ENCODE measurements at regions of chr12 and their contacts with region 1.

Region 1: DNA sequence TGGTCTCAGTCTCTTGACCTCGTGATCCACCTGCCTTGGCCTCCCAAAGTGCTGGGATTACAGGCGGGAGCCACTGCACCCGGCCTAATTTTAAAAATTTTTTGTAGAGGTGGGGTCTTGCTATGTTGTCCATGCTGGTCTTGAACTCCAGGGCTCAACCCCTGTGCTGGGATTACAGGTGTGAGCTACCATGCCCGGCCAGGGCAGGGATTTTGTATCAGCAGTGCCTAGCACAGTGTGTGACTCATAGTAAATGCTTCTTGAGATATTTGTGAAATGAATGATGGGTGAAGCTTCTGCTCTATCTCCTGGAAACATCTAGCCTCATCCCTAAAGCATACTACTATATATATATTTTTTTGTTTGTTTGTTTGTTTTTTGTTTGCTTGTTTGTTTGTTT is 36.5 kb downstream of the CCDC63 start:
- DNase-seq: no peak
- H3K4me3 ChIP-seq: no peak overlapping the region
- H3K27ac ChIP-seq: no peak overlapping the region
- H3K4me1 ChIP-seq: no peaks in the 10 kb centered on the region
- H3K27me3 ChIP-seq: no peaks in the 10 kb centered on the region
- CTCF ChIP-seq: no peak

Region 2: GRCh38 chr12:110528277-110528839 is 354.9 kb before region 1 on chr12:
- CTCF ChIA-PET with region 1: no interaction called
- dilution Hi-C with region 1: no loop called
- in situ Hi-C with region 1: no loop called
- intact Hi-C with region 1: no loop called
- DNase-seq: no peak
- H3K4me3 ChIP-seq: no peak overlapping the region
- H3K27ac ChIP-seq: no peak overlapping the region
- H3K4me1 ChIP-seq: peaks cover 19% of the 10 kb centered on the region
- H3K27me3 ChIP-seq: no peaks in the 10 kb centered on the region
- CTCF ChIP-seq: no peak

Region 3: GRCh38 chr12:110993472-110993833 is 110.2 kb after region 1 on chr12:
- CTCF ChIA-PET with region 1: no interaction called
- dilution Hi-C with region 1: loop called (anchors 5 kb)
- in situ Hi-C with region 1: no loop called
- intact Hi-C with region 1: no loop called
- DNase-seq: no peak
- H3K4me3 ChIP-seq: no peak overlapping the region
- H3K27ac ChIP-seq: no peak overlapping the region
- H3K4me1 ChIP-seq: no peaks in the 10 kb centered on the region
- H3K27me3 ChIP-seq: peaks cover 2% of the 10 kb centered on the region
- CTCF ChIP-seq: no peak

Measured in mammary epithelial cell (primary cell).